ENCODE measurements at regions of chr17 and their contacts with region 1.

Region 1: GRCh38 chr17:38667099-38667786 is 7.5 kb downstream of the EPOP start:
- DNase-seq: no peak
- H3K4me3 ChIP-seq: no peak overlapping the region
- H3K27ac ChIP-seq: no peak overlapping the region
- H3K4me1 ChIP-seq: no peaks in the 10 kb centered on the region
- H3K27me3 ChIP-seq: peaks cover 0 to 54% (median 8%) of the 10 kb centered on the region in 4 donors
- CTCF ChIP-seq: peak; percentile 97 to 100 (median 99)
- EP300 ChIP-seq: no peak
- POLR2A ChIP-seq: no peak

Region 2: DNA sequence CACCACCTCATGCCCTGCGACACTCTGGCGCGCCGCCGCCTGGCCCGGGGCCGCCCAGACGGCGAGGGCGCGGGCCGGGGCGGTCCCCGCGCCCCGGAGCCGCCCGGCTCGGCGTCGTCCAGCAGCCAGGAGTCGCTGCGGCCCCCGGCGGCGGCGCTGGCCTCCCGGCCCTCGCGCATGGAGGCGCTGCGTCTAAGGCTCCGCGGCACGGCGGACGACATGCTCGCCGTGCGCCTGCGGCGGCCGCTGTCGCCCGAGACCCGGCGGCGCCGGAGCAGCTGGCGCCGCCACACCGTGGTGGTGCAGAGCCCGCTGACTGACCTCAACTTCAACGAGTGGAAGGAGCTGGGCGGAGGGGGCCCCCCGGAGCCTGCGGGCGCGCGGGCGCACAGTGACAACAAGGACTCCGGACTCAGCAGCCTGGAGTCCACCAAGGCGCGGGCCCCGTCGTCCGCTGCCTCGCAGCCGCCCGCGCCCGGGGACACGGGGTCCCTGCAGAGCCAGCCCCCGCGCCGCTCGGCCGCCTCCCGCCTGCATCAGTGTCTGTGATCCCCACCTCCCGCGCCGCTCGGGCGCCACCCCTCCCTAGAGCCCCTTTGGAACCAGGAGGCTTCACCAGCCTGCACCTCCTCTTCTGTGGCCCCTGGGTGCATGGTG is 156.7 kb before region 1 on chr17:
- intact Hi-C with region 1: loop called (anchors 10 kb)
- DNase-seq: no peak
- H3K4me3 ChIP-seq: peak overlapping the region; percentile 31 to 40 (median 36)
- H3K27ac ChIP-seq: no peak overlapping the region
- H3K4me1 ChIP-seq: peaks cover 11 to 38% (median 33%) of the 10 kb centered on the region in 4 donors
- H3K27me3 ChIP-seq: peaks cover 0 to 14% (median 0%) of the 10 kb centered on the region in 4 donors
- CTCF ChIP-seq: peak in 2 of 3 experiments; percentile 10 to 21
- EP300 ChIP-seq: no peak
- POLR2A ChIP-seq: no peak

Region 3: DNA sequence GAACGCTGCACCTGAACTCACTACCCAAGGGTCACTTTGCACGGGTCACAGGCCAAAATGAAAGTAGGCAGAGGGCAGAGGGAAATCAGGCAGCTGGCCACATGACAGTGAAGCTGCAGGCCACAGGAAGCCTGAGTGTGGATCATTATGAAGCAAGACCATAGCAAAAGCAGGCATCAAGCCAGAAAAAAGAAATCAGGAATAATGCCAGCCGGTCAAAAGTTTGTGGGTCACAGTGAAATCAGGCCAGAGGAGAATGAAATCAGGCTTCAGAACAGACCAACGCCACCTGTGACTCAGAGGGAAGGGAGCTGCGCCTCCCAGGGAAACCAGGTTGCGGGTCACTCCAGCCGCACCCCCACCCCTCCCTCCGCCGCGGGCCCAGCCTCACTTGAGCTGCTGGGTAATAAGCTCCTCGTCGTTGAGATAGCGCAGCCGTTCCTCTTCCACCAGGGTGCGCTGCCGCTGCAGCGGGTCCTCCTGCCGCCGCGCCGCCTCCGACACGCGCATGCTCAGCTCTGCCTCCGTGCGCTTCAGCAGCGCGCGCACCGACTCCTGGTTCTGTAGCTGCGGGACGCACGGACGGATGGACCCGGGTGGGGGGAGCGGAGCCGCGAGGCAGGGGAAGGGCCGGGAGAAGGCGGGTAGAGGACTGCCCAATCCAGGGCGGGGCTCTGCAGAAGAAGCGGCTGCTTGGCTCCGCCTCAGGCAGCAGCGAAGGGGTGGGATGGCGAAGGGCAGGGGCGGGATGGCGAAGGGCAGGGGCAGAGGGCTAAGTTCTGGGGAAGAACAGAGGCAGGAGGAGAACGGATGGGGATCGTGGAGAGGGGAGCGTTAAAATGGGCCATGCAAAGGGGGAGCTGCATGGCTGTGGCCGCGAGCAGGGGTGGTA is 109.2 kb before region 1 on chr17:
- intact Hi-C with region 1: loop called (anchors 2 kb)
- DNase-seq: peak; percentile 96
- H3K4me3 ChIP-seq: peak overlapping the region; percentile 45 to 63 (median 50)
- H3K27ac ChIP-seq: peak overlapping the region in 3 of 4 donors; percentile 18 to 36 (median 31)
- H3K4me1 ChIP-seq: peaks cover 28 to 52% (median 34%) of the 10 kb centered on the region in 4 donors
- H3K27me3 ChIP-seq: peaks cover 24 to 79% (median 41%) of the 10 kb centered on the region in 4 donors
- CTCF ChIP-seq: peak; percentile 92 to 98 (median 94)
- EP300 ChIP-seq: no peak
- POLR2A ChIP-seq: no peak

Region 4: DNA sequence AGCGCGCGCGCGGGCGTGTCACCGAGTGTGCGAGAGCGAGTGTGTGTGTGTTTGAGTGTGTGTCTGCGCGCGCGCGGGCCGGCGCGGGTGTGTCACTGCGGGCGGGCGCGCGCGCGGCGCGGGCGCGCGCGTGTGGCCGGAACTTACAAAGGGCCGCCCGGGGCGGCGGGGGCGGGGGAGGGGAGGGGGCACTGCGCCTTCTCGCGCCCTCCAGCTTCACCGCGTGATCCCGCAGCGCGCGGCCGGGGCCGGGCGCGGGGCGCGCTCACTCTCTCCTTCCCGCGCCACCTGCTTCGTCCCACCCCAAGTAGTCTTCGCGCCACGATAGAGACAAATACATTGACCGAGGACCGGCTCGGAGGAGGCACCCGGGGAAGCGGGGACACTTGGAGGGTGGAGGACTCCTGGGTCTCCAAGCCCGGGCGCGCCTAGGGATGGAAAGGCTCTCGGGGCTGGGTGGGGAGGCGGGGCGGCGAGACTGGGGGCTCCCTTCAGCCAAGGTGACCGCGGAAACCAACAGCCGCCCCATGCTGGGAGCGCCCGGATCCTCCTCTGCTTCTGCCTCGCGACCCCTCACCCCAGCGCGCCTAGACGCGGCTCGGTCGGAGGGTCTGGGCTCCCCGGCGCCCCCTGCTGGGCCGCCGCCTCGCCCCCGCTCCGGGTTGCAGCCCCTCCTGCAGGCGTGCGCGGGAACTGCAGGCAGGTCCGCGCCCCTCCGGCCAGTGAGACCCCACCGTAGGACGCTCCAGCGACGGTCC is 61.2 kb before region 1 on chr17 and contains the start of gene SRCIN1:
- intact Hi-C with region 1: loop called (anchors 10 kb)
- DNase-seq: no peak
- H3K4me3 ChIP-seq: peak within 1 kb of the TSS; percentile 55 to 69 (median 58)
- H3K27ac ChIP-seq: peak within 1 kb of the TSS in 1 of 4 donors; percentile 45
- H3K4me1 ChIP-seq: peaks cover 16 to 54% (median 36%) of the 10 kb centered on the region in 4 donors
- H3K27me3 ChIP-seq: peaks cover 0 to 96% (median 35%) of the 10 kb centered on the region in 4 donors
- CTCF ChIP-seq: peak; percentile 47 to 70 (median 60)
- EP300 ChIP-seq: no peak
- POLR2A ChIP-seq: no peak
- total RNA-seq, gene SRCIN1: 1.2 to 2.7 (median 2.3) TPM

Region 5: DNA sequence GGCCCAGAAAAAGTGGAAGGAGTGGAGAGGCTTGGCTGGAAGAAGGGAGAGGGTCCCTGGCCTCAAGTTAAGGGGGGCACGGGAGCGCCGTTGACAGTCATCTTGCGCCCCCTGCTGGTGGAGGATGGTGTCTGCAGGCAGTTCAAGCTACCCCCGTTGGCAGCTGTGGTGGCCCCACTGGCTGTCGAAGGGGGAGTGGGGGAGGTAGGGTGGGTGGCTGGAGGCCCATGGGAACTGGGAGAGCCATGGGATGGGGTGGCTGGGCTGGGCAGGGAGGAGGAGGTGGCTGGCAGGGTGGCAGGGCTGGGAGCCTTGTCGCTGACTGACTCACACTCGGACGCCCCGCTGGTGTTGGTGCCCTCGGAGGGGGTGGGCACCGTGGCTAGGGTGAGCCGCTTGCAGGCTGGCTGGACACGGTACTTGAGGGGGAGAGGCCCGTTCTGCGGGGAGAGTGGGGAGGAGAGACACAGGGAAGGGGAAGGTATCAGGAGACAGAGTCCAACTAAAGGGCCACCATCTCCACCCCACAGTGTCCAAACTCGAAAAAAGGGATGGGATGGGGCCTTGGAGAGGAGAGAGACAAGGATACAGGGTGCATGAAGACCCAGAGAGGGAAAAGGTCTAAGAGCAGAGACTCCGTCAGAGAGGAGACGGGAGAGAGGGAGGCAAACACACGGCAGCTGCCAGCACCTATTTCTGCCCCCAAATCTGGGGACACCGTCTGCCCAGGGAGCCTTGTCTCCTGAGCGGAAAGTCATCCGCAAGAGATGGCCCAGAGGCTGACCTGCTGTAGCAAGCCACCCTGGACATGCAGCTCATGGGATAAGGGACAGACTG is 68.1 kb after region 1 on chr17:
- intact Hi-C with region 1: no loop called
- DNase-seq: no peak
- H3K4me3 ChIP-seq: no peak overlapping the region
- H3K27ac ChIP-seq: peak overlapping the region in 2 of 4 donors; percentile 8 to 10
- H3K4me1 ChIP-seq: peaks cover 47 to 58% (median 52%) of the 10 kb centered on the region in 4 donors
- H3K27me3 ChIP-seq: no peaks in the 10 kb centered on the region
- CTCF ChIP-seq: peak; percentile 94 to 97 (median 95)
- EP300 ChIP-seq: no peak
- POLR2A ChIP-seq: no peak